ENCODE measurements at regions of chr14 and their contacts with region 1.

Region 1: GRCh38 chr14:22872033-22872832 is 693 bp downstream of the LRP10 start:
- DNase-seq: peak; percentile 84
- H3K4me3 Mint-ChIP-seq: peak overlapping the region; percentile 88
- H3K27ac Mint-ChIP-seq: peak overlapping the region; percentile 100
- H3K4me1 Mint-ChIP-seq: peaks cover 33% of the 10 kb centered on the region
- H3K27me3 Mint-ChIP-seq: no peaks in the 10 kb centered on the region

Region 2: DNA sequence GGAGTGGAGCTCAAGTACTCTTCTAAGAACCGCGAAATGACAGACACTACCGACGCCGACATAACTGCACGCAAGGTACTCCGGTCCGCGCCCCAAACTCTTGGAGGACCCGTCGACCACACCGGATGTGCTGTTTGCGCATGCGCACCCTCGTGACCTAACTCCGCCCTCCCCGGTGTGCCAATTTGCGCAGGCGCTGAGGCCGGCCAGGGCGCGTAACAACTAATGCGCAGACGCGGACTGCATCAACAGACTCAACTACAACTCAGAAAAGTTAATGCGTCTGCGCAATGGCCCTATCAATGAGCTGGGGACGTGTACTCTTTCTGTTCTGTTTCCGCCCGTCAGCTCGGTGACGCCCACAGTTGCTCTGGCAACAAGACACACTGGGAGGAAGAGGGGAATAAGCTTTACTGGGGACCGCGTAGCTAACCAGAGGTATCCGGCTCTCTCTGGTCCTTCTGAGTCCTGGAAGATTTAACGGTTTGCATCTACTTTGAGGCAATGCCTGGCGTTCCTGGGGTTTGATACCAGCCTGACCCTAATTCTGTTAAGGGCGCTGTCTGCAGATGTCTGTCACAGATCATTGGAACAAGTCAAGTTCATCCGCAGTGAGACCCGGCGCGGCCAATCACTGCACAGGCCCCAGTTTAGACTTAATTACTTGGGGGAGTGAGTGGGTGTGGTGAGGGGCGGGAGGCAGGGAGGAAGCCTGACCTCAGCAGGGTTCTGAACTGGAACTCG is 283.0 kb before region 1 on chr14 and contains the start of gene DAD1:
- CTCF ChIA-PET with region 1: interaction called, 5 read pairs
- POLR2A ChIA-PET with region 1: interaction called, 8 read pairs
- intact Hi-C with region 1: loop called (anchors 1 kb)
- DNase-seq: peak; percentile 100
- H3K4me3 Mint-ChIP-seq: peak within 1 kb of the TSS; percentile 99
- H3K27ac Mint-ChIP-seq: peak within 1 kb of the TSS; percentile 100
- H3K4me1 Mint-ChIP-seq: peaks cover 64% of the 10 kb centered on the region
- H3K27me3 Mint-ChIP-seq: peaks cover 5% of the 10 kb centered on the region
- total RNA-seq, gene DAD1: 292 to 305 TPM

Region 3: GRCh38 chr14:22814941-22815713 is 57.1 kb before region 1 on chr14 and contains the start of gene SLC7A7:
- CTCF ChIA-PET with region 1: no interaction called
- POLR2A ChIA-PET with region 1: no interaction called
- intact Hi-C with region 1: no loop called
- DNase-seq: no peak
- H3K4me3 Mint-ChIP-seq: no peak within 1 kb of the TSS
- H3K27ac Mint-ChIP-seq: no peak within 1 kb of the TSS
- H3K4me1 Mint-ChIP-seq: peaks cover 17% of the 10 kb centered on the region
- H3K27me3 Mint-ChIP-seq: peaks cover 4% of the 10 kb centered on the region
- total RNA-seq, gene SLC7A7: 0.10 to 0.34 TPM

Region 4: DNA sequence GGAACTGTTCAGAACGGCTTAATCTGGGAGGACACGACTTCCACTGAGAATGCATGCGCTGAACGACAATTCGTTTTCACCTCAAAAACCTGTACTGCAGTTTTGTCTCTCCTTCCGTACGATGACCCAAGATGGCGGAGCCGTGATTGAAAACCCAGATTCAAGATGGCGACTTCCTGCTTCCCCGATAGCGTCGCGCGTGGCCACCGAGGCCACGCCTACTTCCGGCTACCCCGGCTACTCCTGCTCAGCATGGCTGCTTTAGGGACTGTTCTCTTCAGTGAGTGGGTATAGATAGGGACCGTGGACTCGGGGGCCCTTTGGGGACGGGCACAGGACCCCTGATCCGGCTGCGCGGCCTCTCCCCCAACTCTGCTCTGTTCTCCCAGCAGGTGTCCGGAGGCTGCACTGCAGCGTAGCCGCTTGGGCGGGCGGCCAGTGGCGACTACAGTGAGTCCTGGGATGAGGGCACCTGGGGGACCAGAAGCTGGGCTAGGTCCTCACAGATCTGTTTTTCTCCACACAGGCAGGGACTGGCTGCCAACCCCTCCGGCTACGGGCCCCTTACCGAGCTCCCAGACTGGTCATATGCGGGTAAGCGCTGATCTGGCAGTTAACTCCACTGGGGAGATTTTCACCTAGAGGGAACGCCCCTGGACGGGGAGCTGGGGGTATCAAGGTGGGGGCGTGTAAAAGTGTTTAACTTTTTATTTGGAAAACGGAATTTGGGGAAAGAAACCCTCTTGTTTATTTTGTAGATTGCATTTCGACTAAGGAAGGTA is 42.4 kb before region 1 on chr14 and contains the start of gene MRPL52:
- CTCF ChIA-PET with region 1: interaction called, 6 read pairs
- POLR2A ChIA-PET with region 1: interaction called, 8 read pairs
- intact Hi-C with region 1: loop called (anchors 1 kb)
- DNase-seq: peak; percentile 94
- H3K4me3 Mint-ChIP-seq: peak within 1 kb of the TSS; percentile 95
- H3K27ac Mint-ChIP-seq: peak within 1 kb of the TSS; percentile 95
- H3K4me1 Mint-ChIP-seq: peaks cover 26% of the 10 kb centered on the region
- H3K27me3 Mint-ChIP-seq: peaks cover 2% of the 10 kb centered on the region
- total RNA-seq, gene MRPL52: 152 to 156 TPM

Region 5: DNA sequence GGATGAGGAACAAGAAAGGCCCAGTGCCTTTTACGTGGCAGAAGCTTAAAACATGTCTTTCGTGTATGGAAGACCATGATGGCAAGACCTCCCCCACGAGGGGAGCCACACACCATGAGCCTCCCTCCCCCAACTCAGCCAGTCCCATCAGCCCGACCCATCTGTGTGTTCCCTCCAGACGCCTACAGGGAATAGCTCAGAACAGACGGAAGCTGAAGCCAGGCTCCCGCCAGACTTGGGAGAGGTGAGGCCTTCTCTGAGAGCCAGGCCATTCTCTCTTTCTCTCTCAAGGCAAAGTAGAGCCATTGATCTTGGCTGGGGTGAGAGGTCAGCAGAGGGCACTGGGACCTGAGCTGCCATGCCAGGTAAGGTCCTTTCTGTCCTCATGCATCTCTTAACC is 20.3 kb after region 1 on chr14:
- CTCF ChIA-PET with region 1: interaction called, 115 read pairs
- POLR2A ChIA-PET with region 1: interaction called, 3 read pairs
- intact Hi-C with region 1: loop called (anchors 1 kb)
- DNase-seq: no peak
- H3K4me3 Mint-ChIP-seq: no peak overlapping the region
- H3K27ac Mint-ChIP-seq: no peak overlapping the region
- H3K4me1 Mint-ChIP-seq: peaks cover 24% of the 10 kb centered on the region
- H3K27me3 Mint-ChIP-seq: no peaks in the 10 kb centered on the region

Region 6: DNA sequence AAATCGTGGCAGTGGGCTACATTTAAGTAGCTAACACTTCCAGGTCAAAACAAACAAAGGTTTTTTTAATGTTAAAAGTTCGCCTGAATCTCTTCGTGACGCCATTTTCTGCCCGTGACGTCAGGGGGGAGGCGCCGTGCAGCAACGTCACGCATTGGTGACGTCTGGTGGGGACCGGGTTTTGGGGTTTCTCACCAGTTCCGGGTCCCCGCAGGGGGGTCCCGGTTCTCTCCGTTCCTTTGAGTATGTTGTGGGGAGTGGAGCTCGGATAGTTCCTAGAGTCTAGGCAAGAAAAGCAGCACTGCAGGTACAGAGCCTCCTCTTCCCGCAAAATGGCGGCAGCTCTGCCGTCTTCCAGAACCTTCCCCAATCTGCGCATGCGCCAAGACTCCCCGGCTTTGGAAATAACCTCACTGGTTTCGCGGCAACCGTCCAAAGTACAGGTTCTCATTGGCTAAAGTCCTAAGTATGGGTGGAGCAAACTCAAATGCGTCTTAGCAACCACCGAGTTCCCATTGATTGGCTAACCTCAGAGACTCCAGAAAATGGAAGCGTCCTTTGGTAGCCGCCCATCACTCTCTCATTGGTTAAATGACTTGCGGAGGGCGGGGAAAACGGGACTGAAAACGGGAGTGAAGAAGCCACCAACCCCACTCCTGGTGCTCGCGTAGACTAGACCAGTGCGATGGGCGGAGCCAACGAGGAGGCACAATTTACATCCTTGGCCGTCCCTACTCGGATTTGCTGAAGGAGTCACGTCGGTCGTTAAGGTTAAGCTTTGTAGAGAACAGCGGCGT is 46.8 kb after region 1 on chr14 and contains the start of gene RBM23:
- CTCF ChIA-PET with region 1: interaction called, 35 read pairs
- POLR2A ChIA-PET with region 1: interaction called, 4 read pairs
- intact Hi-C with region 1: loop called (anchors 1 kb)
- DNase-seq: peak; percentile 100
- H3K4me3 Mint-ChIP-seq: peak within 1 kb of the TSS; percentile 84
- H3K27ac Mint-ChIP-seq: peak within 1 kb of the TSS; percentile 99
- H3K4me1 Mint-ChIP-seq: peaks cover 35% of the 10 kb centered on the region
- H3K27me3 Mint-ChIP-seq: no peaks in the 10 kb centered on the region
- total RNA-seq, gene RBM23: 55.0 to 56.0 TPM

Region 7: DNA sequence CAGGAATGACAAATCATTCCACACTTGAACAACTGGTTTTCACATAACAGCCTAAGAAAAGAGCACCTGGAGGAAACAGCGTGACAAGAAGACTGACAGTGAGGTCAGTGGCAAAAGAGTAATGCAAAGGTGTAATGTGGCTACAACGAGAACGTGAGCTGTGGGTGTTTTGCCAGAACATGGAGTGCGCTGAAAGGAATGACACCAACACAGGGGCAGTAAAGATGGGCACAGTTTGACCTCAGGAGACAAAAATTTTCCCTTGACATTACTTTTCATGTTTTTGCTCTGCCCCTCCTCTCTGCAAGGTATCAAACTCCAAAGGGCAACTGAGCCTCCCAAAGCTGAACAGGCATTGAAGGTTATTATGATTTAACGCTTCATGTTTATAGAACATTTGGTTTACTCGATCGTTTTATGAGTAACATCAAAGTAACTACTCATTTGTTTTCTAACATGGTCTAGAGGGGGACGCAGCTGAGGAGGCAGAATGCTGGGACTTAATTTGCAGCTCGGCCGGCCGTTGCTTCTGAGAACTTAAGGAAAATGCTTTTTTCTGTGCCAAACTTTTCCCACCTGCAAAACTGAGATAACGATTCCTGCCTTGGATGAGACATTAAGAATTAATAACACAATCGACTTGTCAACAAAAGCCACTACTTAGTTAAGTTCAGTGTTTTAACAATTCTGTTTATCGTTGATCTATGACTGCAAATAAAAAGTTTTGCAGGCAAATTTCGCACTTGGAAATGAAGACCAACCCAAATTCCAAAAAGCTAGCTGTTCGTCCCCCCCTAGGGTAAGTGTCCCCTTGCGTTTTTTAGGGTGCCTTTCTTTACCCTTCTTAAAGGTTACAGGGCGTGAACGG is 83.7 kb after region 1 on chr14:
- CTCF ChIA-PET with region 1: interaction called, 3 read pairs
- POLR2A ChIA-PET with region 1: no interaction called
- intact Hi-C with region 1: loop called (anchors 1 kb)
- DNase-seq: no peak
- H3K4me3 Mint-ChIP-seq: peak overlapping the region; percentile 88
- H3K27ac Mint-ChIP-seq: peak overlapping the region; percentile 85
- H3K4me1 Mint-ChIP-seq: peaks cover 16% of the 10 kb centered on the region
- H3K27me3 Mint-ChIP-seq: no peaks in the 10 kb centered on the region